B cell (primary cell): ENCODE measurements at regions of chr19 and their contacts with region 1.

Region 1: GRCh38 chr19:51660975-51661600 is 14.5 kb upstream of the SIGLEC14 start:
- DNase-seq: peak; percentile 80
- ATAC-seq: peak; percentile 62
- H3K4me3 ChIP-seq: no peak overlapping the region
- H3K4me3 Mint-ChIP-seq: no peak overlapping the region
- H3K27ac ChIP-seq: no peak overlapping the region
- H3K27ac Mint-ChIP-seq: no peak overlapping the region
- H3K4me1 ChIP-seq: peaks cover 7 to 8% of the 10 kb centered on the region in 2 donors
- H3K4me1 Mint-ChIP-seq: peaks cover 9% of the 10 kb centered on the region
- H3K27me3 ChIP-seq: peaks cover 0 to 28% (median 18%) of the 10 kb centered on the region in 4 experiments
- H3K27me3 Mint-ChIP-seq: peaks cover 38% of the 10 kb centered on the region
- CTCF ChIP-seq: peak; percentile 75

Region 2: GRCh38 chr19:51338563-51339312 is 322.4 kb before region 1 on chr19:
- CTCF ChIA-PET with region 1: interaction called, 52 read pairs
- POLR2A ChIA-PET with region 1: no interaction called
- intact Hi-C with region 1: loop called (anchors 1 kb)
- DNase-seq: peak; percentile 93
- ATAC-seq: peak; percentile 60
- H3K4me3 ChIP-seq: peak overlapping the region; percentile 11 to 77 (median 58)
- H3K4me3 Mint-ChIP-seq: peak overlapping the region; percentile 97
- H3K27ac ChIP-seq: no peak overlapping the region
- H3K27ac Mint-ChIP-seq: peak overlapping the region; percentile 80
- H3K4me1 ChIP-seq: peaks cover 22 to 42% of the 10 kb centered on the region in 2 donors
- H3K4me1 Mint-ChIP-seq: peaks cover 36% of the 10 kb centered on the region
- H3K27me3 ChIP-seq: no peaks in the 10 kb centered on the region
- H3K27me3 Mint-ChIP-seq: no peaks in the 10 kb centered on the region
- CTCF ChIP-seq: peak; percentile 87

Region 3: DNA sequence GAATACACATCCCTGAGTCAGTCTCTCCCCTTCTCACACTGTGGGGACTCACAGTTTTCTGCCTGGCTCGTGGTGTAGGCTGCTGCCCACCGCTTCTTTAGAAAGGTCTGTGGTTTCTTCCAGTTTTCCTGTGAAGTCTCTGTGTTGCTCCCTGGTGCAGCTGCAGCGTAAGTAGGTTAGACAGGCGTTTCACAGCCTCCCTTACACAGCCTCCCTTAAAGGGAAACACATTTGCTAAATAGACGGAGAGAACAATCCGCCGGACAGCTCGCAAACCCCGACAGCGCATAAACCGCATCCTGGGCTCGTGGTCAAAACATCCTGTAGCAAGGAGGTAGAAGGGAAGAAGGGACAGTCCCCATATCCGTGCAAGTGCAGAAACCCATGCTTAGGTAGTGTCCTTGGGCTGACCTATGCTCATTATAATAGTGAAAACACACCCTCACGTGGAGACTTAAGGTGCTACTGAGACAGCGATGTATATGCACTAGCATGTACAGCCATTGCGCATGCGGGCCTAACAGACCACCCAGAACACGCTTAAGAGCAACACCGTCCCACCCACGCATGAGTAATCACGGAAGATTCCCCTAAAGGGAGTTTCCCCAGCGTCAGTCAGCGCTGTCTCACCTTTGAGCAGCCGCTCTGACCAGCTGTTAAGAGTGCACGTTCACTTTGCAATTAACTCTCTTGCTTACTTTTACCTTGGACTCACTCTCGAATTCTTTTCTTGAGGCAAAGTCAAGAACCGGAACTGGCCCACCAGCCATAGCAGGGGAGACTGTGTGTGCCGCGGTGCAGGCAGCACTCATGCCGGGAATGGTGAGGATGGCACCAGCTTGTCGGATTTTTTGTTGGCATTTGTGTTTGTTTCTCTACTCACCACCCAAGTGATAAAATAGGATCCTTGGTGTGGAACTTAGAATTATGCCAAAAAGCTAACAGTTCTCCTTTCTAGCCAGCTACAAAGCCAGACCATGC is 219.4 kb before region 1 on chr19:
- CTCF ChIA-PET with region 1: interaction called, 22 read pairs
- POLR2A ChIA-PET with region 1: no interaction called
- intact Hi-C with region 1: no loop called
- DNase-seq: peak; percentile 88
- ATAC-seq: peak; percentile 89
- H3K4me3 ChIP-seq: peak overlapping the region; percentile 5 to 41 (median 37)
- H3K4me3 Mint-ChIP-seq: peak overlapping the region; percentile 71
- H3K27ac ChIP-seq: peak overlapping the region; percentile 61 to 71
- H3K27ac Mint-ChIP-seq: peak overlapping the region; percentile 83
- H3K4me1 ChIP-seq: peaks cover 20 to 32% of the 10 kb centered on the region in 2 donors
- H3K4me1 Mint-ChIP-seq: peaks cover 32% of the 10 kb centered on the region
- H3K27me3 ChIP-seq: peaks cover 0 to 15% (median 3%) of the 10 kb centered on the region in 4 experiments
- H3K27me3 Mint-ChIP-seq: peaks cover 20% of the 10 kb centered on the region
- CTCF ChIP-seq: peak; percentile 22

Region 4: DNA sequence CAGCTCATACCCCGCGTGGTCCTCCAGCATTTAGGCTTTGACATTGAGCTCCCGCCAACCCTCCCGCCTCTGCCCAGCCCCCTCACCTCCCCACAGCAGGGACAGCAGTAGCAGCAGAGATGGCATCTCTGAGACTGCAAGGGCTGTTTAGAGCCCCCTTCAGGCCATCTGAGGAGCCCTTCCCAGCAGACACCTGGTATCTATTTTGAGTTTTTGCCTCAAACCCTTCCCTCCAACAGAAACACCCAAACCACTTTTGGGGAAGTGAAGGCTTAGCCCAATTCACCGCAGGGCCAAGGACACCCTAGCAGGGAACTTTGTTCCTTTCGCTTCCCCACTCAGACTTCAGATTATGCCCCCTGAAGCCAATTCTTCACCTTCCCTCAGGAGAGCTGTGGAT is 96.3 kb before region 1 on chr19:
- CTCF ChIA-PET with region 1: interaction called, 12 read pairs
- POLR2A ChIA-PET with region 1: no interaction called
- intact Hi-C with region 1: no loop called
- DNase-seq: peak; percentile 57
- ATAC-seq: peak; percentile 54
- H3K4me3 ChIP-seq: peak overlapping the region in 1 of 5 experiments; percentile 20
- H3K4me3 Mint-ChIP-seq: peak overlapping the region; percentile 29
- H3K27ac ChIP-seq: no peak overlapping the region
- H3K27ac Mint-ChIP-seq: peak overlapping the region; percentile 32
- H3K4me1 ChIP-seq: peaks cover 20 to 22% of the 10 kb centered on the region in 2 donors
- H3K4me1 Mint-ChIP-seq: peaks cover 24% of the 10 kb centered on the region
- H3K27me3 ChIP-seq: no peaks in the 10 kb centered on the region
- H3K27me3 Mint-ChIP-seq: no peaks in the 10 kb centered on the region
- CTCF ChIP-seq: no peak

Region 5: DNA sequence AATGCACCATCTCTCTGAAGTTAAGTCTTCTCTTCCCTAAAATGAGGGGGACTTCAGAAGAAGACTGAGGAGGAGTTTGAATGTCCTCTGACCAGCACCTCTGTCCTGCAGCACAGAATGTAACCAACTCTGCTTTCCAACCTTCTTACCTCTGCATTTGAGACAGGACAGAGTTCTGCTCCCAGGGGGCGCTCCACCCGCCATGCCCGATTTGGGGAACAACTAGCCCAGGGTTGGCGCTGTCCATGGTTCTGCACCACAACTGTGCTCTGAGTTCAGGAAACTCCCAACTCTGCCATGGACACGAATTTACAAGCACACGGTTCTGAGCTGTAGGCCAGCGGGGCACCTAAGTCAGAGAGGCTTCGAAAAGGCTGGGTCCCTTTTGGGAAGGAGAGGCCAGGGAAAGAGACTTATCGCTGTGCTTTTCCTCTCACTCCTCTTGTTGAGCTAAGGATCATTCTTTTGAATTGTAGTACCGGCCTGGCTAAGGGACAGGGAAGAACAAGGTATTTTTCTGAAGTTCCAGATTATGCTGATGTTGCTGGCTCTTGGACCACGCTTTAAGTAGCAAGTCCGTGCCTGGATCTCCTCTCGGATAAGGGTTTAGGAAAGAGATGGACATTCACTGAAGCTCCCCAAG is 53.0 kb before region 1 on chr19:
- CTCF ChIA-PET with region 1: interaction called, 44 read pairs
- POLR2A ChIA-PET with region 1: interaction called, 9 read pairs
- intact Hi-C with region 1: no loop called
- DNase-seq: peak; percentile 85
- ATAC-seq: no peak
- H3K4me3 ChIP-seq: no peak overlapping the region
- H3K4me3 Mint-ChIP-seq: peak overlapping the region; percentile 82
- H3K27ac ChIP-seq: peak overlapping the region in 1 of 2 donors; percentile 82
- H3K27ac Mint-ChIP-seq: peak overlapping the region; percentile 95
- H3K4me1 ChIP-seq: peaks cover 36 to 37% of the 10 kb centered on the region in 2 donors
- H3K4me1 Mint-ChIP-seq: peaks cover 57% of the 10 kb centered on the region
- H3K27me3 ChIP-seq: no peaks in the 10 kb centered on the region
- H3K27me3 Mint-ChIP-seq: no peaks in the 10 kb centered on the region
- CTCF ChIP-seq: peak; percentile 55

Region 6: GRCh38 chr19:51676566-51677083 is 15.5 kb after region 1 on chr19:
- CTCF ChIA-PET with region 1: interaction called, 11 read pairs
- POLR2A ChIA-PET with region 1: no interaction called
- intact Hi-C with region 1: no loop called
- DNase-seq: no peak
- ATAC-seq: no peak
- H3K4me3 ChIP-seq: no peak overlapping the region
- H3K4me3 Mint-ChIP-seq: no peak overlapping the region
- H3K27ac ChIP-seq: no peak overlapping the region
- H3K27ac Mint-ChIP-seq: no peak overlapping the region
- H3K4me1 ChIP-seq: peaks cover 0 to 7% of the 10 kb centered on the region in 2 donors
- H3K4me1 Mint-ChIP-seq: peaks cover 4% of the 10 kb centered on the region
- H3K27me3 ChIP-seq: peaks cover 0 to 24% (median 13%) of the 10 kb centered on the region in 4 experiments
- H3K27me3 Mint-ChIP-seq: peaks cover 50% of the 10 kb centered on the region
- CTCF ChIP-seq: no peak